K562 (cell line): ENCODE measurements at regions of chr2 and their contacts with region 1.

Region 1: GRCh38 chr2:207746131-207746530 is 23.6 kb downstream of the FZD5 start:
- DNase-seq: peak; percentile 45 to 76 (median 50)
- ATAC-seq: peak; percentile 96
- H3K4me3 ChIP-seq: no peak overlapping the region
- H3K27ac ChIP-seq: no peak overlapping the region
- H3K4me1 ChIP-seq: peaks cover 2 to 5% of the 10 kb centered on the region in 2 experiments; a peak in 2 of 5 replicates
- H3K27me3 ChIP-seq: no peaks in the 10 kb centered on the region
- CTCF ChIP-seq: peak; percentile 82 to 91 (median 82)
- EP300 ChIP-seq: no peak
- POLR2A ChIP-seq: no peak
- RAD21 ChIP-seq: peak; percentile 95 to 97

Region 2: DNA sequence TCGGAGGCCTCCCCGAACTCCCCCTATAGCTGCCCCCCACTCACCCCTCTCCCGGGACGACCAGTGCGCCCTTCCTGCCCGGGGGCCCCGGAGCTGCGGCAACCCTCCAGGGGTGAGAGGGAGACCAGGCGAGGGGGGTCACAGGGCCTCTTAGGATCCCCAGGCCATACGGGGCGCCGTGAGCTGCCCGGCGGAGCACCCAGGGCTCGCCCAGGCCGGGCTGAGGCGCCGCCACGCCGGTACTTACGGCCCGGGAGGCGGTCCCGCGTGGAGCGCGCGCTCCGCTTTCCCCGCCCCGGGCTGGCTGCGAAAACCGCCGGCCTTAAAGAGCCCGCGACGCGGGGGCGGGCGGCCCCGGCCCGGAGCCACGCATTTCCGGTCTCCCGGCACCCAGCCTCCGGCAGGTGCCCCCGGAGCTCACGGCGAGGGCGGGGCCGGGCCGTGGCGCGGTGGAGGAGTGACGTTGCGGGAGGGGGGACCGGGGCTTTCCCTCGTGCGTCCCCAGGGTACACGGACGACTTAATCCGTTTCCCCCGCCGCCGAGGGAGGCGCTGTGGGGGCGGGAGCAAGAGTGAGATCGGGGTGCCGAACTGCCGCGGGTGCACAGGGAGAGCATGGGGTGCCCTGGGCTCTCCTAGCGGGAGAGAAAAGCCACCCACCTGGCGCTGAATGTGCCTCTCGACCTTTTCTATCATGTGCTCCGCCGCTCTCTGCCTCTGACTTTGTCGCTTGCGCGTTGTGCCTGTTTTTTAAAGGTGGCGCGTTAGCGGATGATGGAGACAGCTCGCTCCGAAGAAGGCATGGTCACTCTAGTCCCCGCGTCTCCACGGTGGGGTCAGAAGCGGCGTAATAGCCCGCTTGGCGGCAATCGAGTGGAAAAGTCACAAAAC is 120.9 kb before region 1 on chr2 and contains the start of gene METTL21A:
- CTCF ChIA-PET with region 1: no interaction called
- POLR2A ChIA-PET with region 1: no interaction called
- in situ Hi-C with region 1: no loop called
- intact Hi-C with region 1: loop called (anchors 5 kb)
- DNase-seq: peak; percentile 87 to 94 (median 92)
- ATAC-seq: peak; percentile 85
- H3K4me3 ChIP-seq: peak within 1 kb of the TSS; percentile 86
- H3K27ac ChIP-seq: peak within 1 kb of the TSS; percentile 96
- H3K4me1 ChIP-seq: peaks cover 0 to 24% of the 10 kb centered on the region in 2 experiments; a peak in 2 of 5 replicates
- H3K27me3 ChIP-seq: no peaks in the 10 kb centered on the region
- CTCF ChIP-seq: peak; percentile 53 to 54 (median 54)
- EP300 ChIP-seq: 0 out of 2 replicates have a peak, but pooled peaks have one; percentile 11
- POLR2A ChIP-seq: peak; percentile 81
- RAD21 ChIP-seq: no peak
- polyA plus RNA-seq, gene METTL21A: 9.1 to 9.9 TPM

Region 3: DNA sequence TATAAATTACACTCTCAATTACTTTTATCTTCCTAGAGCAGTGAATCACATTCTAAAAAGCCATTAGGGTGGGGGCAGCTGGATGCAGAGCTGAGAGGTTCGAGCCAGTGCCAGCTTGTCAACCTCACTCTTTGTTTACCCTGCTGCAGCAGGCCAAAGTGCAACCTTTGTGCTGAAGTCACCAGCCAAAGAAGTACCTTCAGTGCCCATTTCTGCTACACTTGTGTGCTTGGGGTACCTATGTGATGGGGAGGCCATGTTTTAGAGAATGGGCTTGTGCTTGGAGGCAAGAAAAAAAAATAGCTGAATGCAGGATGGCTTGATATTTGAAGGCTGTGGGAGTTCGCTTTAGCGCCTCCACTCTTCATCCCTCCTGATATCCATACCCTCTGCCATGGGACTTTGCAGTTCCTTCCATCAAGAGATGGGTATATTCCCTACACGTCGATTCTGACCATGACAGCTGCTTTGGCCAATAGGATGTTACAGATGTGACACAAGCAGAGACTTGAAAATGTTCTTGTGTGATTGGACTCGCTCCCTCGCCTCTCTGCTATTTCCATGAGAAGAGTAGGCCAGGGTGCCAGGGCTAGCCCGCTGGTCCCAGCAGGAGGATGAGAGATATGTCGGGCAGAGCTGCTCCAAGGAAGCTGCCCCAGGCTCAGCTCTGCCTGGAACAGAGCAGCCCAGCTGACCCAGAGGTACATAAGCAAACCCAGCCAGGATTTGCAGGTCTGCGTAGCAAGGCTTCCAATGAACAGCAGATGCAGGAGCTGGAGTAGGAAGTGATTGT is 36.3 kb after region 1 on chr2:
- CTCF ChIA-PET with region 1: no interaction called
- POLR2A ChIA-PET with region 1: no interaction called
- in situ Hi-C with region 1: no loop called
- intact Hi-C with region 1: no loop called
- DNase-seq: no peak
- ATAC-seq: no peak
- H3K4me3 ChIP-seq: no peak overlapping the region
- H3K27ac ChIP-seq: no peak overlapping the region
- H3K4me1 ChIP-seq: peaks cover 2 to 4% of the 10 kb centered on the region in 2 experiments; a peak in 2 of 5 replicates
- H3K27me3 ChIP-seq: no peaks in the 10 kb centered on the region
- CTCF ChIP-seq: no peak
- EP300 ChIP-seq: no peak
- POLR2A ChIP-seq: no peak
- RAD21 ChIP-seq: no peak

Region 4: GRCh38 chr2:207974216-207974605 is 228.1 kb after region 1 on chr2:
- CTCF ChIA-PET with region 1: no interaction called
- POLR2A ChIA-PET with region 1: interaction called, 3 read pairs
- in situ Hi-C with region 1: no loop called
- intact Hi-C with region 1: loop called (anchors 1 kb)
- DNase-seq: no peak
- ATAC-seq: no peak
- H3K4me3 ChIP-seq: no peak overlapping the region
- H3K27ac ChIP-seq: no peak overlapping the region
- H3K4me1 ChIP-seq: peaks cover 0 to 2% of the 10 kb centered on the region in 2 experiments; a peak in 1 of 5 replicates
- H3K27me3 ChIP-seq: no peaks in the 10 kb centered on the region
- CTCF ChIP-seq: no peak
- EP300 ChIP-seq: no peak
- POLR2A ChIP-seq: no peak
- RAD21 ChIP-seq: no peak

Region 5: DNA sequence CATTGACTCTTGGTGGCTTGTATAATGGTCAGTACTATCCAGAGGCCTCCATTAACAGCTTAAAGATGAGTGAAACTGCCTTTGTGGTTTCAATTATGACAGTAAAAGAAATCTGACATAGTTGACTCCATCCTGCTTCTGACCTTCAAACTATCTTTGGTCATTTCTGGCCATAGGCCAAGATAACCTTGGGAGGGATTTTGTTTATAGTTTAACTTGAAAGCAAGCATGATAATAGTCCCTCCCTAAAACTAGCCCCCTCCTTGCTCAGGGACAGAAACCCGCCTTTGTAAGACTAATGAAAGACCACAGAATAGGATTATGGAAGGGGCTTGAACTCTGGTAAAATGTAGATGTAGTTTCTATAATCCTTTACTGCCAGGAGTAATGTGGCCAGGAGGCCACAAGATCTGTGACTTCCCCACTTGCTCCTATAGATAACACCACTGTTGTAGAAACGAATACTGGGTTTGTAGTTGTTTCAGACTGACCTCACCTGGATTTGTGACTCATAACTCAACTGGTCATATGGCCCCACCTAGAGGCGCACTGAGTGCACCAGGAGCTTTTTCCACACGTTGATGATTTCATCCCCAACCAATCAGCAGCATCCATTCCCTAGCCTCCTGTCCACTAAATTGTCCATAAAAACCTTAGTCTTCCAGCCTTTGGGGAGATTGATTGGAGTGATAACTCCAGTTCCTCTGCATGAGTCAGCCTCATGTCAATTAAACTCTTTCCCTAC is 287.8 kb after region 1 on chr2:
- CTCF ChIA-PET with region 1: interaction called, 9 read pairs
- POLR2A ChIA-PET with region 1: interaction called, 3 read pairs
- in situ Hi-C with region 1: loop called (anchors 5 kb)
- intact Hi-C with region 1: loop called (anchors 1 kb)
- DNase-seq: peak; percentile 51 to 68 (median 54)
- ATAC-seq: peak; percentile 97
- H3K4me3 ChIP-seq: no peak overlapping the region
- H3K27ac ChIP-seq: no peak overlapping the region
- H3K4me1 ChIP-seq: no peaks in the 10 kb centered on the region; a peak in 1 of 5 replicates
- H3K27me3 ChIP-seq: no peaks in the 10 kb centered on the region
- CTCF ChIP-seq: peak; percentile 47 to 71 (median 55)
- EP300 ChIP-seq: no peak; the same call in 1 of the 2 replicates
- POLR2A ChIP-seq: no peak
- RAD21 ChIP-seq: peak; percentile 46 to 73

Region 6: GRCh38 chr2:208072250-208072892 is 326.2 kb after region 1 on chr2:
- CTCF ChIA-PET with region 1: interaction called, 13 read pairs
- POLR2A ChIA-PET with region 1: interaction called, 4 read pairs
- in situ Hi-C with region 1: loop called (anchors 5 kb)
- intact Hi-C with region 1: loop called (anchors 1 kb)
- DNase-seq: peak; percentile 41 to 81 (median 53)
- ATAC-seq: peak; percentile 97
- H3K4me3 ChIP-seq: no peak overlapping the region
- H3K27ac ChIP-seq: no peak overlapping the region
- H3K4me1 ChIP-seq: no peaks in the 10 kb centered on the region; a peak in 1 of 5 replicates
- H3K27me3 ChIP-seq: no peaks in the 10 kb centered on the region; a peak in 1 of 5 replicates
- CTCF ChIP-seq: peak; percentile 71 to 83 (median 74)
- EP300 ChIP-seq: no peak
- POLR2A ChIP-seq: no peak
- RAD21 ChIP-seq: peak; percentile 78 to 85